HCT116 (cell line): ENCODE measurements at regions of chr6 and their contacts with region 1.

Region 1: GRCh38 chr6:151323791-151324487 is 67.4 kb downstream of the ZBTB2 start:
- DNase-seq: peak; percentile 72
- ATAC-seq: peak; percentile 67
- H3K4me3 ChIP-seq: no peak overlapping the region
- H3K27ac ChIP-seq: peak overlapping the region; percentile 65
- H3K4me1 ChIP-seq: peaks cover 26 to 77% of the 10 kb centered on the region in 2 experiments
- H3K27me3 ChIP-seq: no peaks in the 10 kb centered on the region
- CTCF ChIP-seq: peak; percentile 65 to 98 (median 93)
- POLR2A ChIP-seq: no peak
- RAD21 ChIP-seq: peak; percentile 97

Region 2: GRCh38 chr6:151014404-151015100 is 309.4 kb before region 1 on chr6:
- CTCF ChIA-PET with region 1: interaction called, 60 read pairs
- POLR2A ChIA-PET with region 1: interaction called, 43 read pairs
- RAD21 ChIA-PET with region 1: interaction called, 23 to 28 read pairs
- intact Hi-C with region 1: loop called (anchors 1 kb)
- DNase-seq: peak; percentile 75
- ATAC-seq: peak; percentile 78
- H3K4me3 ChIP-seq: no peak overlapping the region
- H3K27ac ChIP-seq: peak overlapping the region; percentile 78
- H3K4me1 ChIP-seq: peaks cover 70 to 75% of the 10 kb centered on the region in 2 experiments
- H3K27me3 ChIP-seq: no peaks in the 10 kb centered on the region
- CTCF ChIP-seq: peak; percentile 74 to 99 (median 98); a peak in 5 of 6 replicates
- POLR2A ChIP-seq: no peak
- RAD21 ChIP-seq: peak; percentile 99

Region 3: GRCh38 chr6:151044465-151045441 is 279.2 kb before region 1 on chr6:
- CTCF ChIA-PET with region 1: interaction called, 4 read pairs
- POLR2A ChIA-PET with region 1: interaction called, 75 read pairs
- RAD21 ChIA-PET with region 1: no interaction called
- intact Hi-C with region 1: no loop called
- DNase-seq: peak; percentile 82
- ATAC-seq: peak; percentile 49
- H3K4me3 ChIP-seq: peak overlapping the region; percentile 37 to 38
- H3K27ac ChIP-seq: peak overlapping the region; percentile 91
- H3K4me1 ChIP-seq: peaks cover 58 to 86% of the 10 kb centered on the region in 2 experiments
- H3K27me3 ChIP-seq: no peaks in the 10 kb centered on the region
- CTCF ChIP-seq: no peak
- POLR2A ChIP-seq: no peak
- RAD21 ChIP-seq: no peak

Region 4: DNA sequence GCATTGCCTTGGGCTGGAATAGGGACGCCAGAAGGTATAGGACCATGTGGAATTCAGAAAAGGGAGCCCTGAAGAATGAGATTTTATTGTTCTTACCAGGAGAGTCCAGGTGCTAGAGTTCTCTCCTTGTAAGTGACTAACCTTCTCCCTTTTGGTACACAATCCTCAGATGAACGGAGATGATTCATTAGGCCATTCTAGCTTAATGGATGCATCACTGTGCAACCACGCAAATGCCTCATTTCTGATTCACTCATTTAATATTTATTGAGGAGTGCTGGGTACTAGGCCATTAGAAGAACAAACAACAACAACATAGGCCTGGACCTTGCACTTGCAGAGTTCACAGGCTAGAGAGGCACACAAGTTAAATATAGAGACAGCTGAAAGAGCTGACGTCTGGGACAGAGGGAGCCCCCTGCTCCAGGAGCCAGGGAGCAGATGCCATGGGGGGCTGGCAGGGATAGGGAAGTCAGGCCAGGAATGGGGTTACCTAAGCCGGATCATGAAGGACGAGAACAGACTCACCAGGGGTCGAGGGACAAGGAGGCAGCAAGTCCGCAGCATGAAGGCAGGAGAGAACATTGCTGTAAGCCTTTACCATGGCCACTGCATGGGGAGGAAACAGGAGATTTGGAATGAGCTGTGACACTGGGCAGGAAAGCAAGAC is 263.7 kb before region 1 on chr6:
- CTCF ChIA-PET with region 1: interaction called, 5 read pairs
- POLR2A ChIA-PET with region 1: interaction called, 41 read pairs
- RAD21 ChIA-PET with region 1: no interaction called
- intact Hi-C with region 1: loop called (anchors 5 kb)
- DNase-seq: peak; percentile 98
- ATAC-seq: peak; percentile 80
- H3K4me3 ChIP-seq: peak overlapping the region in 1 of 2 experiments; percentile 3; a peak in 2 of 4 replicates
- H3K27ac ChIP-seq: peak overlapping the region; percentile 100
- H3K4me1 ChIP-seq: peaks cover 89 to 95% of the 10 kb centered on the region in 2 experiments
- H3K27me3 ChIP-seq: no peaks in the 10 kb centered on the region
- CTCF ChIP-seq: no peak
- POLR2A ChIP-seq: no peak
- RAD21 ChIP-seq: no peak

Region 5: DNA sequence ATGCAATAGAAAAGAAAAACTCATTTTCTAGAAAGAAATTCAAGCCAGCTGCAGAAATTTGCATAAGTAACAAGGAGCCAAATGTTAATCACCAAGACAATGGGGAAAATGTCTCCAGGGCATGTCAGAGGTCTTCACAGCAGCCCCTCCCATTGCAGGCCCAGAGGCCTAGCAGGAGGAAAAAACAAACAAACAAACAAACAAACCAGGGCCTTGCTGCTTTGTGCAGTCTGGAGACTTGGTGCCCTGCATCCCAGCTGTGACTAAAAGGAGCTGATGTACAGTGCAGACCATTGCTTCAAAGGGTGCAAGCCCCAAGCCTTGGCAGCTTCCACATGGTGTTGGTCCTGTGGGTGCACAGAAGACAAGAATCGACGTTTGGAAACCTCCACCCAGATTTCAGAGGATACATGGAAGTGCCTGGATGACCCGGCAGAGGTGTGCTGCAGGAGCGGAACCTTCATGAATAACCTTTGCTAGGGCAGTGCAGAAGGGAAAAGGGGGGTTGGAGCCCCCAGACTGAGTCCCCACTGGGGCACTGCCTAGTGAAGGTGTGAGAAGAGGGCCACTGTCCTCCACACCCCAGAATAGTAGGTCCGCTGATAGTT is 195.1 kb before region 1 on chr6:
- CTCF ChIA-PET with region 1: no interaction called
- POLR2A ChIA-PET with region 1: no interaction called
- RAD21 ChIA-PET with region 1: no interaction called
- intact Hi-C with region 1: loop called (anchors 5 kb)
- DNase-seq: no peak
- ATAC-seq: no peak
- H3K4me3 ChIP-seq: no peak overlapping the region
- H3K27ac ChIP-seq: no peak overlapping the region
- H3K4me1 ChIP-seq: peaks cover 20 to 50% of the 10 kb centered on the region in 2 experiments
- H3K27me3 ChIP-seq: no peaks in the 10 kb centered on the region
- CTCF ChIP-seq: no peak
- POLR2A ChIP-seq: no peak
- RAD21 ChIP-seq: no peak

Region 6: DNA sequence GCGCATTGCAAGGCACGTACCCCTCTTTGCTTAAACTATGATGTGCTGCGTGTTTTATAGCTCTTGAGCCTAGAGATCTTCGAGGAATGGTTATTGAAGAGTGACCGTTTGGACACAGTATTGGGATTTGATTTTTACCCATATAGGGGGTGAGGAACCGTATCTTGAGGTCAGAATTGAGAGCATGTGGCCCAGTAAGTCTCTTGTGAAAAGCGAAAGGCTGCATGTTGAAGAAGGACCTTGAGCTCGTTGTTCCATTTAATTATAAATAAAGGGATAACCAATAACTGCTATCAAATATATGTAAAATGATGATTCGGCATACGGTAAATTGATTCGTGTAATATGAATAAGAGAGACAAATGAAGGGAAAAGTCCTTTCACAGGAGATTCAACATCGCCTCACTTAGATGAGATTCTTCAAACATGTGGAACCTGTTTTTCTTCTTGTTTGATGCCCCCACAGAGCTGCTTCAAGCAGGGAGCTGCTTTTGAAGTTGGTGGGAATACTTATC is 17.6 kb before region 1 on chr6:
- CTCF ChIA-PET with region 1: interaction called, 3 read pairs
- POLR2A ChIA-PET with region 1: interaction called, 10 read pairs
- RAD21 ChIA-PET with region 1: interaction called in 1 of 2 experiments, 3 read pairs
- intact Hi-C with region 1: no loop called
- DNase-seq: no peak
- ATAC-seq: no peak
- H3K4me3 ChIP-seq: no peak overlapping the region
- H3K27ac ChIP-seq: no peak overlapping the region
- H3K4me1 ChIP-seq: peaks cover 2 to 13% of the 10 kb centered on the region in 2 experiments; a peak in 2 of 4 replicates
- H3K27me3 ChIP-seq: no peaks in the 10 kb centered on the region
- CTCF ChIP-seq: no peak
- POLR2A ChIP-seq: no peak
- RAD21 ChIP-seq: no peak